Caco-2 (cell line): ENCODE measurements at regions of chr7 and their contacts with region 1.

Region 1: GRCh38 chr7:100101016-100101862 is at the starts of genes AP4M1 and MCM7:
- DNase-seq: peak; percentile 99 to 100
- H3K4me3 ChIP-seq: peak within 1 kb of the TSS; percentile 93
- H3K4me3 Mint-ChIP-seq: peak within 1 kb of the TSS; percentile 95
- H3K27ac Mint-ChIP-seq: peak within 1 kb of the TSS; percentile 99
- H3K4me1 ChIP-seq: peaks cover 5% of the 10 kb centered on the region; the same call in 1 of the 2 replicates
- H3K4me1 Mint-ChIP-seq: peaks cover 23% of the 10 kb centered on the region
- H3K27me3 ChIP-seq: no peaks in the 10 kb centered on the region
- H3K27me3 Mint-ChIP-seq: no peaks in the 10 kb centered on the region
- CTCF ChIP-seq: no peak
- total RNA-seq, gene AP4M1: 14.9 and 16.2 TPM in 2 replicates
- total RNA-seq, gene MCM7: 227 and 240 TPM in 2 replicates

Region 2: DNA sequence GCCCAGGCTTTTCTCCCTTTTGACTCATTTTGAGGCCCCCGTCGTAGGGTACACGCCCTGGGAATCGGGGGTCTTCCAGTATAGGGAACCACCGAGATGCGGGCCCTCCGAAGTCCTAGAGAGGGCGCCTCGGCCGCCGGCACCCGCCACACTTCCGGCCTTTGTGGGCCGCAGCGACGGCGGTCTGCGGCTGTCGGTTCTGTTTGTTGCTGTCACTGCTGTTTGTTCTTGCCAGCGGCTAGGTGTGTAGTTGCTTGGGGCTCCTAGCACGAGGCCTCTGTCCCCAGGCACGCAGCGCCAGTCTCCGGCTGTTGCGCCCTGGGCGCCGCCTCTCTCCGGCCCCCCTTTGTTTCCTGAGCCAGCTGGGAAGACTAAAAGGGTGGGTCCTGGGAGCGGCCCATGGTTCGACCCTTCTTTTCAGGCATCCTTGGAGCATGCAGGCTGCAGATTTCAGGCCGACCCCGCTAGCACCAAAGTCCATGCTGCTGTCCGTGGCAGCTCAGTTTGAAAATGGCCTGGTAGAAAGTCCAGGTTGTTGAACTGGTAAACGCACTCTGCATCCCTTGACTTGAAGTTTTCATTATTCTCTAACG is 103.6 kb before region 1 on chr7:
- CTCF ChIA-PET with region 1: no interaction called
- POLR2A ChIA-PET with region 1: interaction called, 18 read pairs
- intact Hi-C with region 1: no loop called
- DNase-seq: peak; percentile 77 to 82
- H3K4me3 ChIP-seq: peak overlapping the region; percentile 38
- H3K4me3 Mint-ChIP-seq: peak overlapping the region; percentile 76
- H3K27ac Mint-ChIP-seq: peak overlapping the region; percentile 89
- H3K4me1 ChIP-seq: peaks cover 13% of the 10 kb centered on the region; the same call in 1 of the 2 replicates
- H3K4me1 Mint-ChIP-seq: peaks cover 7% of the 10 kb centered on the region
- H3K27me3 ChIP-seq: no peaks in the 10 kb centered on the region
- H3K27me3 Mint-ChIP-seq: no peaks in the 10 kb centered on the region
- CTCF ChIP-seq: peak; percentile 33 to 37

Region 3: DNA sequence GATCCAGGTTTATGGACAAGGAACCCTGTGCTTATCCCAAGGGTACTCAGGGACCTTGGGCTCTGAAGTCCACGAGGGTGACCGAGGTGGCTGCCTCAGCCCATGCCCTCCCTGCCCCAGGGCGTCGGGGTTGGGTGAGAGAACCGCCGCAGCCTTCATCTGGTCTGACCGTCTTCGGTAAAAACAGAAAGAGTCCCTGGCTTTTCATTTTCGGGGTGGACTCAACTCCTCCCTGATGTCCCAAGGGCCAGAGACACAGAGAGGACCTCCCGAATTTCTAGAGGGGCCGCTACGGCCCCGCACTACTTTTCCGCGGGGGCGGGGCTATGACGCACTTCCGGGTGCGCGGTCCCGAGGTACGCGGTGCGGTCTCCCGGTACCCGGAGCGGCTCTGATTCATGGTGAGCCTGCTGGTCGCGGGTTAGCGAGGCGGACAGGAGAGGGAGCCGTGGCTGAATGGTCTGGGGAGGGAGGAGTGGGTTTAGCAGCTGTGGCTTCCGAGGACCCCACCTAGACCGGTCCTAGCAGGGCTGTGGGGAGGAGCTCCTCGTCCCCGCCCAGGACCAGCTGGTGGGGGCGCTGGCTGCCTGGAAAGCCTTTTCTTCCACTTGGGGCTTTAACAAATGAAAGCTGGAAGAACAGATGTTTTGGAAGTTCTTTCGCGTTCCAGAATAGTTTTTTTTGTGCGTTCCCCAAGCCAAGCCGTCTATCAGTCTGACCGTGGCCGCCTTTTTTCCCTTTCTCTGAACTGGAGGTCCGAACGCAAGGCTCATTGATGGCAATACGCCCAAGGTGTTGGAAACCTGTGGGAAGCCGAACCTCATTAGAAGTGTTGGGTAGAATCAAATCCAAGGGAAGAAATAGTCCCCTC is 51.6 kb before region 1 on chr7 and contains the start of gene ZSCAN21:
- CTCF ChIA-PET with region 1: interaction called, 4 read pairs
- POLR2A ChIA-PET with region 1: interaction called, 13 read pairs
- intact Hi-C with region 1: no loop called
- DNase-seq: peak; percentile 89 to 91
- H3K4me3 ChIP-seq: peak within 1 kb of the TSS; percentile 78
- H3K4me3 Mint-ChIP-seq: peak within 1 kb of the TSS; percentile 87
- H3K27ac Mint-ChIP-seq: peak within 1 kb of the TSS; percentile 96
- H3K4me1 ChIP-seq: peaks cover 5% of the 10 kb centered on the region
- H3K4me1 Mint-ChIP-seq: peaks cover 8% of the 10 kb centered on the region
- H3K27me3 ChIP-seq: no peaks in the 10 kb centered on the region
- H3K27me3 Mint-ChIP-seq: no peaks in the 10 kb centered on the region
- CTCF ChIP-seq: peak in 1 of 2 experiments; percentile 21
- total RNA-seq, gene ZSCAN21: 15.2 and 16.7 TPM in 2 replicates

Region 4: DNA sequence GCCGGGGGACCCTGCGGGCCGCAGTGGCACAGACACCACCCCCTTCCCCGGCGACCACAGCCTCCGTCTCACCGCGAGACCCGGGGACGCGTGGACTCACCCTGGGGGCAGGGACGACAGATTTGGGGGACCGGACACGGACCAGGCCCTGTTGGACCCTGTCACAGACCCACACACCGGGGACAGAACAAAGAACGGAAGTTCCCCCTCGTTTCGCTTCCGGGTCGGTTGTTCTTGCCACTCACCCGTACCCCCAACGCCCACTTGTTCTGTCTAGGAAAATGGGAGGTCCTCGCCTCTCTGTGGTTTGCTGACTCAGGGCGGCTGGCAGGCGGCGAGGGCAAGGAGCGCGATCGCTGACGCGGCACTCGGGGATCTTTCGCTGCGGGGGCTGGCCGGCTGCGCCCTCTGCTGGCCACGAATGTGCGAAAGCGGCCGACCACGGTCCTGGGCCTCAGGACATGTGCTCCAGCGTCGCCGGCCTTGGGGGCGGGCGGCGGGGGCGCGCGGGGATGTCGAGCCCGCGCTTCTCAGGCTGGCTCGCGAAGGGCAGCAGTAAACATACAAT is 19.6 kb before region 1 on chr7 and contains the start of gene ZNF3:
- CTCF ChIA-PET with region 1: interaction called, 7 read pairs
- POLR2A ChIA-PET with region 1: interaction called, 13 read pairs
- intact Hi-C with region 1: loop called (anchors 2 kb)
- DNase-seq: peak; percentile 99
- H3K4me3 ChIP-seq: peak within 1 kb of the TSS; percentile 74
- H3K4me3 Mint-ChIP-seq: peak within 1 kb of the TSS; percentile 83
- H3K27ac Mint-ChIP-seq: peak within 1 kb of the TSS; percentile 46
- H3K4me1 ChIP-seq: peaks cover 24% of the 10 kb centered on the region
- H3K4me1 Mint-ChIP-seq: peaks cover 14% of the 10 kb centered on the region
- H3K27me3 ChIP-seq: no peaks in the 10 kb centered on the region
- H3K27me3 Mint-ChIP-seq: no peaks in the 10 kb centered on the region
- CTCF ChIP-seq: peak; percentile 89 to 91
- total RNA-seq, gene ZNF3: 37.8 and 41.1 TPM in 2 replicates

Region 5: GRCh38 chr7:100088621-100089457 is 12.4 kb before region 1 on chr7 and contains the start of gene COPS6:
- CTCF ChIA-PET with region 1: interaction called, 4 read pairs
- POLR2A ChIA-PET with region 1: interaction called, 4 read pairs
- intact Hi-C with region 1: loop called (anchors 1 kb)
- DNase-seq: peak; percentile 84 to 93
- H3K4me3 ChIP-seq: peak within 1 kb of the TSS; percentile 76
- H3K4me3 Mint-ChIP-seq: peak within 1 kb of the TSS; percentile 88
- H3K27ac Mint-ChIP-seq: peak within 1 kb of the TSS; percentile 71
- H3K4me1 ChIP-seq: 0 out of 2 replicates have a peak, but pooled peaks cover 7% of the 10 kb centered on the region
- H3K4me1 Mint-ChIP-seq: peaks cover 8% of the 10 kb centered on the region
- H3K27me3 ChIP-seq: no peaks in the 10 kb centered on the region
- H3K27me3 Mint-ChIP-seq: no peaks in the 10 kb centered on the region
- CTCF ChIP-seq: no peak
- total RNA-seq, gene COPS6: 142 and 150 TPM in 2 replicates

Region 6: GRCh38 chr7:100126931-100127865 is 26.0 kb after region 1 on chr7 and contains the start of gene MBLAC1:
- CTCF ChIA-PET with region 1: interaction called, 8 read pairs
- POLR2A ChIA-PET with region 1: interaction called, 23 read pairs
- intact Hi-C with region 1: loop called (anchors 1 kb)
- DNase-seq: peak; percentile 94
- H3K4me3 ChIP-seq: peak within 1 kb of the TSS; percentile 95
- H3K4me3 Mint-ChIP-seq: peak within 1 kb of the TSS; percentile 99
- H3K27ac Mint-ChIP-seq: peak within 1 kb of the TSS; percentile 99
- H3K4me1 ChIP-seq: peaks cover 20% of the 10 kb centered on the region
- H3K4me1 Mint-ChIP-seq: peaks cover 23% of the 10 kb centered on the region
- H3K27me3 ChIP-seq: no peaks in the 10 kb centered on the region
- H3K27me3 Mint-ChIP-seq: no peaks in the 10 kb centered on the region
- CTCF ChIP-seq: no peak
- total RNA-seq, gene MBLAC1: 3.2 and 3.7 TPM in 2 replicates

Region 7: DNA sequence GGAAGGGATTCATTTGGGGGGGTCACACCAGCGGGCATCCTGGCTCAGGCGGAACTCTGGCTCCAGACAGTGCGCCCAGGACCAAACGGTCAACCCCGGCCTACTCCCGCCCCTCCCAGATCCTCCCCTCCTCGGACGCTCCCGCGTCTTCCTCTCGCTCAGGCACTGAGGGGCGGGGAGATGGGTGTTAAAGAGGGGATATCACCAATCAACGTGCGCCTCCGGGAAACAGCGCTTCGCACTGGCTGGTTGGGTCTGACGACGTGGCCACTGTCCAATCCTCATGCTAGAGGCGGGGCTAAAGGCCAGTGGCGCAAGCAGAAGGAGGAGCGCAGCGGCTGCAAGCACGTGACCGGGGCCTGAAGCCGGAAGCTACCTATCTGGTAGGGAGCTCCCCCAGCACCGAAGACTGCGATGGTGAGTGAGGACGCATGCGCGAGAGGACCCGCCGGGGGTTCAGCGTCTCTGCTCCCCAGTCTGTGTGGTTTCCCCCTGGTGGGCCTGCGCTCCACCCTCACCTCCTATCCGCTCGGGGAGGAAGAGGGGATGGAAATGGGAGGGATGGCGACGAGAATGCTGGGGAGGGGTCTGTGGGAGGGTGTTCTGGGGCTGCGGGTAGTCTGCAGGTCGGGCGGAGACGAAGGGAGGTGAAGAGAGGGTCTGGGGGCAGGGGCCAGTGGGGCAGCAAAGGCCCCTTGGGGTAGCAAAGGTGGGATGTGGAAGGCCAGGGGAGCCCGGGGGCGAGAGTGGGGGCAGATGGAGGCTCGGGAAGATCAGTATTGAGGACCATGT is 47.5 kb after region 1 on chr7 and contains the start of gene LAMTOR4:
- CTCF ChIA-PET with region 1: no interaction called
- POLR2A ChIA-PET with region 1: interaction called, 12 read pairs
- intact Hi-C with region 1: no loop called
- DNase-seq: peak; percentile 99 to 100
- H3K4me3 ChIP-seq: peak within 1 kb of the TSS; percentile 71
- H3K4me3 Mint-ChIP-seq: peak within 1 kb of the TSS; percentile 95
- H3K27ac Mint-ChIP-seq: peak within 1 kb of the TSS; percentile 77
- H3K4me1 ChIP-seq: peaks cover 3% of the 10 kb centered on the region
- H3K4me1 Mint-ChIP-seq: peaks cover 12% of the 10 kb centered on the region
- H3K27me3 ChIP-seq: no peaks in the 10 kb centered on the region
- H3K27me3 Mint-ChIP-seq: no peaks in the 10 kb centered on the region
- CTCF ChIP-seq: no peak
- total RNA-seq, gene LAMTOR4: 107 and 110 TPM in 2 replicates

Region 8: GRCh38 chr7:100372256-100372655 is 271.0 kb after region 1 on chr7:
- CTCF ChIA-PET with region 1: no interaction called
- POLR2A ChIA-PET with region 1: no interaction called
- intact Hi-C with region 1: no loop called
- DNase-seq: no peak
- H3K4me3 ChIP-seq: no peak overlapping the region
- H3K4me3 Mint-ChIP-seq: no peak overlapping the region
- H3K27ac Mint-ChIP-seq: no peak overlapping the region
- H3K4me1 ChIP-seq: no peaks in the 10 kb centered on the region
- H3K4me1 Mint-ChIP-seq: no peaks in the 10 kb centered on the region
- H3K27me3 ChIP-seq: no peaks in the 10 kb centered on the region
- H3K27me3 Mint-ChIP-seq: no peaks in the 10 kb centered on the region
- CTCF ChIP-seq: no peak